ENCODE measurements at regions of chr2 and their contacts with region 1.

Region 1: GRCh38 chr2:17719562-17720371 is 33.8 kb downstream of the SMC6 start:
- DNase-seq: no peak

Region 2: GRCh38 chr2:17830053-17831034 is 110.6 kb after region 1 on chr2:
- intact Hi-C with region 1: loop called (anchors 2 kb)
- DNase-seq: peak; percentile 85

Region 3: GRCh38 chr2:18001671-18002070 is 281.9 kb after region 1 on chr2:
- intact Hi-C with region 1: no loop called
- DNase-seq: no peak

Measured in cardiac septum (tissue), 1 donor.